Thyroid gland (tissue), 4 donors: ENCODE measurements at regions of chr4 and their contacts with region 1.

Region 1: DNA sequence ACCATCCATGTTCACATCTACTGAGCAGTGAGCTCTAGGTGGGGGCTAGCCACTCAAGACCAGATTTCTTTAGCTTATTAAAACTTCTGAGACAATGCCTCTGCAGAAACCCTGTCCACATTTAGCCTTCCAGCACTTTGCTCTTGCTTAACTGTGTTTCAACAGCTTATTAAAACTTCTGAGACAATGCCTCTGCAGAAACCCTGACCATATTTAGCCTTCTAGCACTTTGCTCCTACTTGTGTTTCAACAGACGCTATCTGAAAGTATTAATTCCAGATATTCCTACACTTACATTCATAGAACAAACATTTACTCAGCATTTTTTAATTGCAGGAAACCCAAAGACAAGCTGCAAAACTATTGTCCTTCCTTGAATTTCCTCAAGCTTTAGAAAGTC is 91.9 kb downstream of the SEL1L3 start:
- DNase-seq: no peak
- H3K4me3 ChIP-seq: no peak overlapping the region
- H3K27ac ChIP-seq: no peak overlapping the region
- H3K4me1 ChIP-seq: no peaks in the 10 kb centered on the region
- H3K27me3 ChIP-seq: no peaks in the 10 kb centered on the region
- CTCF ChIP-seq: no peak
- POLR2A ChIP-seq: no peak

Region 2: DNA sequence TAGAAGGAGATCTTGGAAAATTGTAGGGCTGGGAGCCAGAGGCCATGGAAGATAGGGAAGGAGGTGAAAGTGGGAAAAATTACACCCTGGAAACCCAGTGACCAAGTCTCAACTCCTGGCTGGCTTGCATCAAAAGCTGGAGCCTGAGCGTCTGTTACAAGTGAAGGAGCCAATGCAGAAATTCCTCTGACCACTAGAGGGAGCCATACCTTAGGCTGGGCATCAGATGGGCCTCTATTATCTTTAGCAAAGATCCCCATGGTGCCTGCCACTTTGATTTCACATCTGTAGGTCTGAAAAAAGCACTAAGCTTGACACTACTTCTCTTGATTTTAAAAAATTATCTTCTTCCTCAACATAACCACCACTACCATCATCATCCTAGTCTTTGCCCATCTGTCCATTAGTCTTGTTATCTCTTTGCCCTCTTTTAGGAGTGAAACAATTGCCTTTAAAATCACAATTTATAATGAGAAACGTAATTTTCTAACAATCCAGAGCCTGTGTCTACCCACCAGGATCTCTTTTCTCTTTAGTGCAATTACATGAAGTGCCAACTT is 330.8 kb before region 1 on chr4:
- intact Hi-C with region 1: loop called (anchors 5 kb)
- DNase-seq: peak; percentile 54 to 56
- H3K4me3 ChIP-seq: no peak overlapping the region
- H3K27ac ChIP-seq: peak overlapping the region in 1 of 3 donors; percentile 40
- H3K4me1 ChIP-seq: peaks cover 0 to 27% of the 10 kb centered on the region in 2 donors
- H3K27me3 ChIP-seq: no peaks in the 10 kb centered on the region
- CTCF ChIP-seq: peak; percentile 70 to 90 (median 82)
- POLR2A ChIP-seq: no peak